HepG2 (cell line): ENCODE measurements at regions of chr18 and their contacts with region 1.

Region 1: DNA sequence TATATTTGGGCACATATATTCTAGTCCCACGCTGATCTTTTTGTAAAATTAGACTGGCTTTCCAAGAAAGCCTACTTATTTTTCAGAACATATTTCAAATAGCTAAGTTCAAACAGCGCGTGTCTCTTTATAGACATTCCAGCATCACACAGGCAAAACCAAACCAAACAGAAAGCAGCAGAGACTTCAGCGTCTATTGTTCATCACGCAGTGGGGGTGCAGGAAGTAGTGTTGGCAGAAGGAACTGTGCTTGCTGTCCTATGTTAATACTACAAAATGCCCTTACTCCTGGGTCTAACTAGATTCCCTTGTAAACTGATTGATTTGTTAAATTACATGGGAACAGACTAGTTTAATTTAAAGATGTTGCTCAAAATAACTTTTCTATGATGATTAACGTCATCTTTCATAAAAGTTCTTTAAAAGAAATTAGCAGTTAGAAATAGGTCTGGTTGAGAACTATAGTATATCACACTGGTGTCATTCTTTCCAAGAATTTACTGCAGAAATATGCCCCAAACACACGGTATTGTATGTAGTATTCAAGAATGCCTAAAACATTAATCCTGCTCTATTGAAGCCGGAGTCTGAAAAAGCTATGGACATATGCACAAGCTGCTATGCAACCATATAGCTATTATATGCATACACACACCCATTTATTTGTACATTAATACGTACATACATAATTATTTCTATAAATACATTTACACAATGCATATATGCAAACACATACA is 436.3 kb downstream of the CBLN2 start:
- DNase-seq: no peak
- ATAC-seq: no peak
- H3K4me3 ChIP-seq: no peak overlapping the region
- H3K27ac ChIP-seq: no peak overlapping the region
- H3K4me1 ChIP-seq: no peaks in the 10 kb centered on the region
- H3K27me3 ChIP-seq: no peaks in the 10 kb centered on the region
- CTCF ChIP-seq: no peak
- EP300 ChIP-seq: no peak
- POLR2A ChIP-seq: no peak
- RAD21 ChIP-seq: no peak

Region 2: DNA sequence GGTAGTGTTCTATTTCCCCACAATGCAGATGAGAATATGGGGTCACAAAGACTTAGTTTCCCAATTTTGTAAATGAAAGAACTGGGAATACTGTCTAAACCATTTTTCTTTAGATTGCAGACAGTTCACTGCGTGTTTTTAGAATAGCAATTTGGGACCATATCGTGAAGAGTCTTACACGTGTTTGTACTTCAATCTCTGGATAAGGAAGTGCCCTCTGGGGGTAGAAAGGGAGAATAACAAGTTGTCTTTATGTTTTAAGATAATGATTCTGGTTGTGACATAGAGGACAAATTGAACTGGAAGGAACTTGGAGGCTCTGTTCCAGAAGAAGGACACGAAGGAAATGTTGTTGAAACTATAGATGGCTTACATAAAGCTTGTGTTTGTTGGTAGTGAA is 21.4 kb before region 1 on chr18:
- CTCF ChIA-PET with region 1: no interaction called
- POLR2A ChIA-PET with region 1: no interaction called
- in situ Hi-C with region 1: no loop called
- intact Hi-C with region 1: loop called (anchors 1 kb)
- DNase-seq: peak; percentile 24
- ATAC-seq: peak; percentile 43; the same call in 1 of the 3 replicates
- H3K4me3 ChIP-seq: no peak overlapping the region
- H3K27ac ChIP-seq: no peak overlapping the region
- H3K4me1 ChIP-seq: no peaks in the 10 kb centered on the region
- H3K27me3 ChIP-seq: no peaks in the 10 kb centered on the region
- CTCF ChIP-seq: peak; percentile 45
- EP300 ChIP-seq: no peak
- POLR2A ChIP-seq: no peak
- RAD21 ChIP-seq: no peak

Region 3: DNA sequence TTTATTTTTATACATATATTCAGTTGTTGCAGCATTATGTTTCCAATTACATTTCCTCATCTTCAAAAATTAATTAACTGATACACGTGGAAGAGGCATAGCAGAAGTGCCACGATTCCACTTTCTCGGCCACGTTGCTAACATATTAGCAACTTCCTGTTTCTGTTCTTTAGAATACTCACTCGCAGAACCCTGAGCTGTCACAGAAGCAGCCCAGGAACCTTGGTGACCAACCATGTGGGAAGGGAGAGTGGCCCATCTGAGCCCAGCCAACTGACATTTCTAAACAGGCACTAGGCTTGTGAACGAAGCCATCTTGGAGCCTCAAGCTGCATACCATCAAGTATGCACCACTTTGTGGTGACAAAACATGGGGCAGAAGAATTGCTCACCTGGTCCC is 86.3 kb after region 1 on chr18:
- CTCF ChIA-PET with region 1: no interaction called
- POLR2A ChIA-PET with region 1: no interaction called
- in situ Hi-C with region 1: no loop called
- intact Hi-C with region 1: no loop called
- DNase-seq: no peak
- ATAC-seq: no peak
- H3K4me3 ChIP-seq: no peak overlapping the region
- H3K27ac ChIP-seq: no peak overlapping the region
- H3K4me1 ChIP-seq: no peaks in the 10 kb centered on the region
- H3K27me3 ChIP-seq: no peaks in the 10 kb centered on the region
- CTCF ChIP-seq: no peak
- EP300 ChIP-seq: no peak
- POLR2A ChIP-seq: no peak
- RAD21 ChIP-seq: no peak